Activated T-helper 2 cell treated with anti-CD3 and anti-CD28 coated beads, Interferon-gamma antibody, Interleukin-2, Interleukin-4, amounts not matched to agents 10 μg/mL and 5 μg/mL and 100 μg/mL, durations not matched to agents 14 hours and 24 hours and 36 hours (primary cell): ENCODE measurements at regions of chr11 and their contacts with region 1.

Region 1: GRCh38 chr11:15819679-15820286 is 536.6 kb downstream of the SOX6 start:
- DNase-seq: peak; percentile 12
- H3K4me3 Mint-ChIP-seq: no peak overlapping the region
- H3K27ac Mint-ChIP-seq: peak overlapping the region; percentile 61
- H3K4me1 Mint-ChIP-seq: peaks cover 43% of the 10 kb centered on the region
- H3K27me3 Mint-ChIP-seq: peaks cover 2% of the 10 kb centered on the region

Region 2: GRCh38 chr11:14974515-14975251 is 845.1 kb before region 1 on chr11:
- intact Hi-C with region 1: no loop called
- DNase-seq: peak; percentile 53
- H3K4me3 Mint-ChIP-seq: peak overlapping the region; percentile 33
- H3K27ac Mint-ChIP-seq: no peak overlapping the region
- H3K4me1 Mint-ChIP-seq: peaks cover 21% of the 10 kb centered on the region
- H3K27me3 Mint-ChIP-seq: peaks cover 75% of the 10 kb centered on the region

Region 3: GRCh38 chr11:15747671-15748070 is 72.1 kb before region 1 on chr11:
- intact Hi-C with region 1: loop called (anchors 2 kb)
- DNase-seq: no peak
- H3K4me3 Mint-ChIP-seq: no peak overlapping the region
- H3K27ac Mint-ChIP-seq: no peak overlapping the region
- H3K4me1 Mint-ChIP-seq: peaks cover 5% of the 10 kb centered on the region
- H3K27me3 Mint-ChIP-seq: no peaks in the 10 kb centered on the region

Region 4: DNA sequence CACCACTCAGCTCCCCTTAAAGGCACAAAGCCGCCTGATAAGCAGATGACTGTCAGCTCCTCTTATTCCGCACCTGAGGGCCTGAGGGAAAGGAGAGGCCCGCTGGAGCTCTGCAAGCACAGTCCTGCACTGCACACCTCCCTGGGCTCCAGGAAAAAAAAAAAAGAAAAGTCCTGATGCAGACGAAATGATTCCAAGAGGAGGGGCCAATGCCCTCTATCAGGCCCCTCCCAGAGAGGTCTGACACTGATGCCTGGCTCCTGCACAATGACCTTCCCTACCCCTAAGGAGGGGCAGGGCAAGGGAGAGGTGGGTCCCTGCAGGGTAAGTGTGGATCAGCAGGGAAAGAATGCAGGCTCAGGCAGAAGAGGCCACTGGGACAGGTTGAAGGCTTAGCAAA is 36.2 kb before region 1 on chr11:
- intact Hi-C with region 1: loop called (anchors 5 kb)
- DNase-seq: no peak
- H3K4me3 Mint-ChIP-seq: no peak overlapping the region
- H3K27ac Mint-ChIP-seq: no peak overlapping the region
- H3K4me1 Mint-ChIP-seq: no peaks in the 10 kb centered on the region
- H3K27me3 Mint-ChIP-seq: no peaks in the 10 kb centered on the region

Region 5: GRCh38 chr11:15801616-15802015 is 18.2 kb before region 1 on chr11:
- intact Hi-C with region 1: loop called (anchors 1 kb)
- DNase-seq: no peak
- H3K4me3 Mint-ChIP-seq: no peak overlapping the region
- H3K27ac Mint-ChIP-seq: peak overlapping the region; percentile 90
- H3K4me1 Mint-ChIP-seq: peaks cover 16% of the 10 kb centered on the region
- H3K27me3 Mint-ChIP-seq: no peaks in the 10 kb centered on the region

Region 6: DNA sequence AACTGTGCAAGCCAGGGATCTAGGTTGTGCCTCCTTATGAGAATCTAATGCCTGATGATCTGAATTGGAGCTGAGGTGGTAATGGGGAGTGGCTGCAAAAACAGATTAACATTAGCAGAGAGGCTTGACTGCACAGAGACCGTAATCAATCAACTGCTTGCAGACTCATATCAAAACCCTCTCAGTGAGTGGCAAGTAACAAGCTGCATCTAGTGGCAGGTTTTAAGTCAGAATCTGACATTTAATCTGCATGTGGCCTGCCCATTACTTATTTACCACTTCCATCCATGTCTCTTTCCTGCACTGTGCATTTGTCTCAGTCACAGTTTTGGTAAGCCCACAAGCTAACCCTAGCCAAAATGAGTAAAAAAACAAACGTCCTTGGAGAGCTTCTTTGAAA is 929.9 kb after region 1 on chr11:
- intact Hi-C with region 1: loop called (anchors 10 kb)
- DNase-seq: no peak
- H3K4me3 Mint-ChIP-seq: no peak overlapping the region
- H3K27ac Mint-ChIP-seq: peak overlapping the region; percentile 74
- H3K4me1 Mint-ChIP-seq: peaks cover 30% of the 10 kb centered on the region
- H3K27me3 Mint-ChIP-seq: no peaks in the 10 kb centered on the region